PC-3 (cell line): ENCODE measurements at regions of chr16 and their contacts with region 1.

Region 1: GRCh38 chr16:23182460-23183309 is at the start of gene SCNN1G:
- DNase-seq: peak; percentile 88
- ATAC-seq: peak; percentile 93
- H3K4me3 ChIP-seq: peak within 1 kb of the TSS; percentile 76
- H3K27ac ChIP-seq: no peak within 1 kb of the TSS
- H3K4me1 ChIP-seq: no peaks in the 10 kb centered on the region
- H3K27me3 ChIP-seq: no peaks in the 10 kb centered on the region
- CTCF ChIP-seq: peak; percentile 82
- total RNA-seq, gene SCNN1G: 4.5 and 6.3 TPM in 2 replicates

Region 2: DNA sequence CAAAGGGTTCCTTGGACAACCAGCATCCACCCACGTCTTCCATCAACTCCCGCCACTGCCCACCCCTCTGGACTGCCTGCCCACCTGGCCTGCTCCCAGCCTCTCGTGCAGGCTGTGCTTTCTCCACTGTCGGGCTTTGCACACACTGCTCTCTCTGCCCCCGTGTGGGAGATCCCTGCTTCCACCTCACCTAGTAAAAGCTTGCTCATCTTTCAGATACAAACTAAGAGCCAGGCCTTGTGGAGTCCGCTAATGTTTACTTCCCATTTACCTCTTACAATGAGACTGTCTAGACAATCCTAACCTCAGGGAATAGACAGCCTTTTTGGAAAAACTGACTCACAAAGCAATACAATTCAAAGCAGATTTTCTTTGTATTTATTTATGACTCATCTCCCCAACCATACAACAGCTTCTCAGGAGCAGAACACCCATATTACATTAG is 101.0 kb before region 1 on chr16:
- CTCF ChIA-PET with region 1: no interaction called
- POLR2A ChIA-PET with region 1: no interaction called
- intact Hi-C with region 1: no loop called
- DNase-seq: no peak
- ATAC-seq: peak; percentile 15; the same call in 1 of the 2 replicates
- H3K4me3 ChIP-seq: no peak overlapping the region
- H3K27ac ChIP-seq: no peak overlapping the region
- H3K4me1 ChIP-seq: peaks cover 13% of the 10 kb centered on the region
- H3K27me3 ChIP-seq: no peaks in the 10 kb centered on the region
- CTCF ChIP-seq: no peak

Region 3: DNA sequence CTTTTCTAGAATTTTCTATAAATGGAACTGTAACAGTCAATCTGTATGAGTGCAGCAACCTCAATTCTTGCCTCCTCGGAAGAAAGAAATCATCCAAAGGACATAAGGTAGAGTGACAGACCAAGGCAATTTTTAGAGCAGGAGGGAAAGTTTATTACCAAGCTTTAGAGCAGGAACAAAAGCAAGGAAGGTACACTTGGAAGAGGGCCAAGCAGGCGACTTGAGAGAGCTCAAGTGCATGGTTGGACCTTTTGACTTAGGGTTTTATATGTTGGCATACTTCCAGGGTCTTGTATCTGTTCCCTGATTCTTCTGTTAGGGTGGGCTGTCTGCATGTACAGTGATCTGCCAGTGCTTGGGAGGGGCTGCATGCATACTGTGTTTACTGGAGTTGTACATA is 50.1 kb after region 1 on chr16:
- CTCF ChIA-PET with region 1: no interaction called
- POLR2A ChIA-PET with region 1: no interaction called
- intact Hi-C with region 1: loop called (anchors 2 kb)
- DNase-seq: no peak
- ATAC-seq: no peak
- H3K4me3 ChIP-seq: no peak overlapping the region
- H3K27ac ChIP-seq: no peak overlapping the region
- H3K4me1 ChIP-seq: peaks cover 19% of the 10 kb centered on the region
- H3K27me3 ChIP-seq: no peaks in the 10 kb centered on the region
- CTCF ChIP-seq: no peak

Region 4: DNA sequence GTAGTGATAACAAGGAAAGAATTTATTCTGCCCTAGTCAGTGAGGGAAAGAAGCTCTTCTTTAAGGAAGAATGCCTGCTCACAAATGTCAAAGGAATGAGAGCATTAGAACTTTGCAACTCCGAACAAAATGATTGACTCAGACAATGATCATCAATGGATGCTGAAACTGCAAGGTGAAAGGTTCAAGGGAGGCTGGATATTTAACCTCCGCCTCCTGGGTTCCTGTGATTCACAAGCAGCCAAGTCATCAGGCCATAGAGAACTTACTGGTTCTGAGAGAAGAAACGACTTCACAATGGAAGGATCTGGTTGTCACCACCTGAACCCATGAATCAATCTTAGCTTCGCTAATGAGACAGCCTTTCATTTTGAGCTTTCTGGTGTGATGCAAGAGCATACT is 103.4 kb after region 1 on chr16:
- CTCF ChIA-PET with region 1: no interaction called
- POLR2A ChIA-PET with region 1: no interaction called
- intact Hi-C with region 1: loop called (anchors 10 kb)
- DNase-seq: peak; percentile 86
- ATAC-seq: no peak
- H3K4me3 ChIP-seq: no peak overlapping the region
- H3K27ac ChIP-seq: peak overlapping the region; percentile 78
- H3K4me1 ChIP-seq: peaks cover 51% of the 10 kb centered on the region
- H3K27me3 ChIP-seq: no peaks in the 10 kb centered on the region
- CTCF ChIP-seq: no peak

Region 5: GRCh38 chr16:23316966-23317661 is 134.4 kb after region 1 on chr16:
- CTCF ChIA-PET with region 1: no interaction called
- POLR2A ChIA-PET with region 1: interaction called, 27 read pairs
- intact Hi-C with region 1: no loop called
- DNase-seq: peak; percentile 34
- ATAC-seq: peak; percentile 90
- H3K4me3 ChIP-seq: no peak overlapping the region
- H3K27ac ChIP-seq: no peak overlapping the region
- H3K4me1 ChIP-seq: no peaks in the 10 kb centered on the region
- H3K27me3 ChIP-seq: no peaks in the 10 kb centered on the region
- CTCF ChIP-seq: no peak

Region 6: GRCh38 chr16:23435500-23435899 is 252.8 kb after region 1 on chr16:
- CTCF ChIA-PET with region 1: interaction called, 21 read pairs
- POLR2A ChIA-PET with region 1: no interaction called
- intact Hi-C with region 1: loop called (anchors 1 kb)
- DNase-seq: peak; percentile 72
- ATAC-seq: peak; percentile 93
- H3K4me3 ChIP-seq: no peak overlapping the region
- H3K27ac ChIP-seq: no peak overlapping the region
- H3K4me1 ChIP-seq: no peaks in the 10 kb centered on the region
- H3K27me3 ChIP-seq: no peaks in the 10 kb centered on the region
- CTCF ChIP-seq: peak; percentile 87

Region 7: GRCh38 chr16:24139282-24139681 is 956.6 kb after region 1 on chr16:
- CTCF ChIA-PET with region 1: no interaction called
- POLR2A ChIA-PET with region 1: no interaction called
- intact Hi-C with region 1: no loop called
- DNase-seq: peak; percentile 3
- ATAC-seq: no peak
- H3K4me3 ChIP-seq: no peak overlapping the region
- H3K27ac ChIP-seq: no peak overlapping the region
- H3K4me1 ChIP-seq: no peaks in the 10 kb centered on the region
- H3K27me3 ChIP-seq: 0 out of 2 replicates have a peak, but pooled peaks cover 10% of the 10 kb centered on the region
- CTCF ChIP-seq: no peak